Common myeloid progenitor, CD34-positive (primary cell): ENCODE measurements at regions of chr12 and their contacts with region 1.

Region 1: GRCh38 chr12:8860165-8860961 is 37.9 kb downstream of the A2ML1 start:
- DNase-seq: peak; percentile 60 to 77 (median 70)
- H3K4me3 ChIP-seq: no peak overlapping the region
- H3K27ac ChIP-seq: no peak overlapping the region
- H3K4me1 ChIP-seq: peaks cover 0 to 5% (median 2%) of the 10 kb centered on the region in 4 experiments
- H3K27me3 ChIP-seq: no peaks in the 10 kb centered on the region

Region 2: DNA sequence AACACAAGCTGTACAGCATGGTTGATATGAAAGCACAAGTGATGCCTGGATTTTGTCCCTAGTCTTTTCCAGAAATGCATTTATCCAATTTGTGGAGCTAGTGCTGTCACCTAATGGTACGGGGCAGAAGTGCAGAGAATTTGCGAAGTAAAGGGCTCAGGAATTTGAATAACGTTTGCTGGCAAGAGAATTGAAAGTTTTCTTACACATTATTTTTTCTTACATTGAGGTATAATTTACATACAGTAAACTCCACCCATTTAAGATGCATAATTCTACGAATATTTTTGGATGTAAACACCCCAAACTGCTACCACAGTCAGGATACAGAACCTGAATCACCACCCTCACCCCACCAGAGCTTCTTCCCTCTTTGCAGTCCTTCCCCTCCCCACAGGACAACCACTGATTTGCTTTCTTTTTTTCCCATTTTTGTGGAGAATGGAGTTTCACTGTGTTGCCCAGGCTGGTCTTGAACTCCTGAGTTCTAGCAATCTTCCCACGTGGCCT is 251.2 kb before region 1 on chr12:
- CTCF ChIA-PET with region 1: no interaction called
- POLR2A ChIA-PET with region 1: no interaction called
- DNase-seq: peak; percentile 31 to 46 (median 42)
- H3K4me3 ChIP-seq: peak overlapping the region in 5 of 7 experiments; percentile 30 to 63 (median 38)
- H3K27ac ChIP-seq: no peak overlapping the region
- H3K4me1 ChIP-seq: peaks cover 4 to 9% (median 6%) of the 10 kb centered on the region in 4 experiments
- H3K27me3 ChIP-seq: no peaks in the 10 kb centered on the region

Region 3: DNA sequence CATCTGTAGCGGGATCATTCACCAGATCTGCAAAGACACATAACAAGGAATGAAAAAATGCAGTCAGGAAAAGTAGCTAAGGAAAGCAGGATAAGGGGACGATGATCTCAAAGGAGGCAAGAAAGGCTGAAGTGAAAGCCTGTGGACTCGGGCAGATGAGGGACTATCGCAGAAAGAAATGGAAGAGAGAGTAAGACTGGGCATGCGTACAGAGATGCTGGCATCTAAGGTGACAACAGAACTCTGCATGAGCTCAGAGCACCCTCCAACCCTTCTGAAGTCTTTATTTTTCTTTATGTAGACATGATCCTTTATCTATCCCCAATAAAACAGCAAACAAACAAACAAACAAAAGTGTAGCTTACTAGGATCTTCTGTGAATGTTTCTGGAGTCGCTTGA is 204.9 kb before region 1 on chr12:
- CTCF ChIA-PET with region 1: interaction called, 15 read pairs
- POLR2A ChIA-PET with region 1: no interaction called
- DNase-seq: no peak
- H3K4me3 ChIP-seq: no peak overlapping the region
- H3K27ac ChIP-seq: no peak overlapping the region
- H3K4me1 ChIP-seq: peaks cover 0 to 2% (median 0%) of the 10 kb centered on the region in 4 experiments
- H3K27me3 ChIP-seq: no peaks in the 10 kb centered on the region

Region 4: GRCh38 chr12:8681041-8681902 is 179.1 kb before region 1 on chr12:
- CTCF ChIA-PET with region 1: interaction called, 30 read pairs
- POLR2A ChIA-PET with region 1: no interaction called
- DNase-seq: no peak
- H3K4me3 ChIP-seq: no peak overlapping the region
- H3K27ac ChIP-seq: no peak overlapping the region
- H3K4me1 ChIP-seq: peaks cover 0 to 2% (median 0%) of the 10 kb centered on the region in 4 experiments
- H3K27me3 ChIP-seq: no peaks in the 10 kb centered on the region

Region 5: DNA sequence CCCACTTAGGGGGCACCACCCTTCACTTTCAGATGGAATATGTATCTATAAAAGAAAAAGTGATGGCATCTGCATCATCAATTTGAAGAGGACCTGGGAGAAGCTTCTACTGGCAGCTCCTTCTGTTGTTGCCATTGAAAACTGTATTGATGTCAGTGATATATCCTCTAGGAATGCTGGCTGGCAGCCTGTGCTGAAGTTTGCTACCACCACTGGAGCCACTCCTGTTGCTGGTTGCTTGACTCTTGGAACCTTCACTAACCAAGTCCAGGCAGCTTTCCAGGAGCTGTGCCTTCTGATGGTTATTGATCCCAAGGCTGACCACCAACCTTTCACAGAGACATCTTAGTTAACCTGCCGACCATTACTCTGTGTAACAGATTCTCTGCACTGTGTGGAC is 117.9 kb before region 1 on chr12:
- CTCF ChIA-PET with region 1: no interaction called
- POLR2A ChIA-PET with region 1: no interaction called
- DNase-seq: no peak
- H3K4me3 ChIP-seq: no peak overlapping the region
- H3K27ac ChIP-seq: no peak overlapping the region
- H3K4me1 ChIP-seq: no peaks in the 10 kb centered on the region
- H3K27me3 ChIP-seq: no peaks in the 10 kb centered on the region

Region 6: GRCh38 chr12:8989413-8989812 is 129.1 kb after region 1 on chr12 and contains the start of gene KLRG1:
- CTCF ChIA-PET with region 1: no interaction called
- POLR2A ChIA-PET with region 1: no interaction called
- DNase-seq: peak; percentile 63 to 96 (median 90)
- H3K4me3 ChIP-seq: peak within 1 kb of the TSS in 6 of 7 experiments; percentile 23 to 68 (median 55)
- H3K27ac ChIP-seq: peak within 1 kb of the TSS; percentile 90 to 96
- H3K4me1 ChIP-seq: peaks cover 22 to 69% (median 49%) of the 10 kb centered on the region in 4 experiments
- H3K27me3 ChIP-seq: no peaks in the 10 kb centered on the region